Activated B cell treated with CpG ODN at 0.5 μM for 24 hours (primary cell): ENCODE measurements at regions of chr6 and their contacts with region 1.

Region 1: DNA sequence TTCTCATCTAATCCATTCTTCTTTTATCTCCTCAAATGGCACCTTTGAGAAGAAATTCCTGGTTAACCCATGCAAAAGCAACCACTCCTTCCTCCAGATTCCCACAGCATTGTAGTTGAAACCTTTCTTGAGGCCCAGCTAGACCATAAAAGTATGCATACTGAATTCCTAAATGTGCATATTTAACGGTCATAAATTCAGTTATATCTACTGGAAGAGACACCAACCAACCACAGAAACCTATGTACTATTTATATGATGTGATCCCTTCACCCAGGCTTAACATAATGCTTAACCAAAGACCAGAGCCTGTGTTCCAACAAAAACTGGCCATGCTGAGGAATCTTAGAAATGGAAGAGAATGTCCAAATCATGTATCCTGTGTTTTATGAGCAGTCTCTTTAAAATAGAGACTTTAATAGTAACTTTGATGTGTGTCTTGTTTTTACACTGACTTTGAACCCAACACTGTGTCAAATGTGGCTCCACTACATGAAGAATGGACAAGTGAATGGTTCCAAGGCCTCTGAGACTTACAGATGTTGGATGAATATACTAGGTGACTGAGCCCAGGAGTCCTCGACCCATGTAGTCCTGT is 11.4 kb upstream of the TAF8 start:
- DNase-seq: no peak
- ATAC-seq: no peak
- H3K4me3 Mint-ChIP-seq: peak overlapping the region; percentile 70
- H3K27ac Mint-ChIP-seq: peak overlapping the region; percentile 92
- H3K4me1 Mint-ChIP-seq: peaks cover 59% of the 10 kb centered on the region
- H3K27me3 Mint-ChIP-seq: no peaks in the 10 kb centered on the region
- CTCF ChIP-seq: no peak

Region 2: GRCh38 chr6:41936073-41936837 is 102.7 kb before region 1 on chr6:
- CTCF ChIA-PET with region 1: interaction called, 90 read pairs
- POLR2A ChIA-PET with region 1: interaction called, 195 read pairs
- intact Hi-C with region 1: loop called (anchors 1 kb)
- DNase-seq: peak; percentile 38
- ATAC-seq: peak; percentile 69
- H3K4me3 Mint-ChIP-seq: peak overlapping the region; percentile 53
- H3K27ac Mint-ChIP-seq: peak overlapping the region; percentile 65
- H3K4me1 Mint-ChIP-seq: peaks cover 78% of the 10 kb centered on the region
- H3K27me3 Mint-ChIP-seq: no peaks in the 10 kb centered on the region
- CTCF ChIP-seq: peak; percentile 63

Region 3: DNA sequence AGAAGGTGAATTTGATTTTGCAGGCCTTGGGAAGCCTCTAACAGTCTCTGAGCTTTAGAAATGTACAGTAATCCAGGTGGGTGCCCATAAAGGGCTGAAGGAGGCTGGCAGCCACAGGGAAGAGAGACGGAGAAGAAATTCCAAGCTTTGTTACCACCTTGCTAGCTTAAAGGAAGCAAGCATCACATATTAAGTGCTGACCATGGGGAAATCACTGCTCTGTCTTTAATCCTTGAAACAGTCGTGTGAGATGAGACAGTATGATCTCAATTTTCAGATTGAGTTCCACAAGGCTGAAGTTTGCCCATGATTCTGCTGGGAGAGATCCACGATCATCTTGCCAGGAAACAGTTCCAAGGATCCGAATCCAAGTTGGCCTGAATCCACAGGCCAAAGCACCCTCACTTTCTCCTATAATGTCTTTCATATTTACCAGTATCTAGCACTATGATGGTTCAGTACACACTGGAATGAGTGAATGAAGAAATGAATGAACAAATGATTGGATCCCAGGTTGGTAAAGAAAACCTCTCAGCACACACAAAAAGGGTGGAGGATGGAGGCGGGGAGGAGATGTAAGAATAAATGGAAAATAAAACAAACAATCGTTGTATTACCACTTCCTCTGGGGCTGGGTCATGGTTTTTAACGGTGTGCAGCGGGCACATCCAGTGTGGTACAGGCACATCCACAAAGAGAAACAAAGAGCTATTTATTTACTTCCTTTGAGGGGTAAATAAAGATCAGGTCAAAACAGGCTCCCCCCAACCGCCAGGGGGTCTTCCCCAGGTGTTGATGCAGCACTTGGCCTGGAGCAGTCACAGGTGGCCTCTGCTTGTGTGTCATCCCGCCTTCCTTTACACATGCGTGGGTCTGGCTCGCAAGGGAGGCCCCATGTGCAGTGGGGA is 16.8 kb before region 1 on chr6:
- CTCF ChIA-PET with region 1: interaction called, 14 read pairs
- POLR2A ChIA-PET with region 1: interaction called, 25 read pairs
- intact Hi-C with region 1: loop called (anchors 1 kb)
- DNase-seq: peak; percentile 58
- ATAC-seq: peak; percentile 38
- H3K4me3 Mint-ChIP-seq: peak overlapping the region; percentile 75
- H3K27ac Mint-ChIP-seq: peak overlapping the region; percentile 99
- H3K4me1 Mint-ChIP-seq: peaks cover 83% of the 10 kb centered on the region
- H3K27me3 Mint-ChIP-seq: no peaks in the 10 kb centered on the region
- CTCF ChIP-seq: no peak

Region 4: GRCh38 chr6:42028234-42029061 is 10.5 kb before region 1 on chr6:
- CTCF ChIA-PET with region 1: interaction called, 14 read pairs
- POLR2A ChIA-PET with region 1: interaction called, 25 read pairs
- intact Hi-C with region 1: loop called (anchors 1 kb)
- DNase-seq: no peak
- ATAC-seq: no peak
- H3K4me3 Mint-ChIP-seq: peak overlapping the region; percentile 44
- H3K27ac Mint-ChIP-seq: peak overlapping the region; percentile 99
- H3K4me1 Mint-ChIP-seq: peaks cover 87% of the 10 kb centered on the region
- H3K27me3 Mint-ChIP-seq: no peaks in the 10 kb centered on the region
- CTCF ChIP-seq: no peak